Left cardiac atrium (tissue), 4 donors: ENCODE measurements at regions of chr1 and their contacts with region 1.

Region 1: GRCh38 chr1:32714277-32714676 is 11.7 kb upstream of the SYNC start:
- DNase-seq: no peak
- ATAC-seq: no peak

Region 2: DNA sequence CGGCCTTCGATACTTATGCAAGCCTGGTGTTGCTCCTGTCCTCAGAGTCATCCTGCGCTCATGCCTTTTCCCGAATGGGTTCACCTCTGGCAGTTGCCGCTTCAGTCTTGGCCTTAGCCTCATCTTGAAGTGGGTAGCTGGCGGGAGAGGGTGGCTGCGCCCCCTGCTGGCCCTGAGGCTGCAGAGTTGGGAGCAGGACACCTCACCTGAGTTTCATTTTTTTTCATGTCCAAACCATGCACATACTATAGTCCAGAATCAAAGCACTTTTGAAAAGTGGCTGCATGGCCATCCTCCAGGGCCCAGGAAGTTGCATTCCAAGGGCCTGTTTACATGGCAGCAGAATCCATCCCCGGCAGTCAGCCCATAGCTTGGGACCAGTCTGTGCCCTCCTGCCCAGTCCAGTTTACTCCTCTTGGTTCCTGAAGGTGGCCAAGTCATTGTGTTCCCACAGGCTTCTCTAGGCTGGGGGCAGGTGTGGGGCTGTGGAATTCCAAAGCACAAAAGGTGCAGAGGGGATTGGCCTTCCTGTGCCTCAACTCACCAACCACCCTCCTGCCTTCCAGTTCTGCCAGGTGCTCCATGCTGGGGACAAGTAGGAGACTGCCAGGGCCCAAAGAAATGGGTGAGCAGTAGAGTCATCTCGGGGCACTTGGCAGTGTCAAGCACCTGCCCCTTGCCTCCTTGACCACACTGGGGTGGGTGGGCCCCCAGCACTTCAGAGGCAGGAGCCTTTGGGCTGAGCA is 58.9 kb after region 1 on chr1:
- intact Hi-C with region 1: loop called (anchors 2 to 5 kb)
- DNase-seq: peak; percentile 83
- ATAC-seq: peak; percentile 76 to 88